Activated T-helper 1 cell treated with anti-CD3 and anti-CD28 coated beads, Interleukin-12 subunit alpha, Interleukin-12 subunit beta, Interleukin-2, Interleukin-4 antibody, amounts not matched to agents 30 ng/mL and 10 ng/mL and 1 ng/mL, durations not matched to agents 14 hours and 24 hours and 36 hours (primary cell): ENCODE measurements at regions of chr2 and their contacts with region 1.

Region 1: GRCh38 chr2:190534310-190535120 is at the start of gene NEMP2:
- DNase-seq: peak; percentile 82
- H3K4me3 Mint-ChIP-seq: peak within 1 kb of the TSS; percentile 95
- H3K27ac Mint-ChIP-seq: peak within 1 kb of the TSS; percentile 99
- H3K4me1 Mint-ChIP-seq: peaks cover 57% of the 10 kb centered on the region
- H3K27me3 Mint-ChIP-seq: no peaks in the 10 kb centered on the region
- total RNA-seq, gene NEMP2: 11.7 and 13.6 TPM in 2 replicates

Region 2: DNA sequence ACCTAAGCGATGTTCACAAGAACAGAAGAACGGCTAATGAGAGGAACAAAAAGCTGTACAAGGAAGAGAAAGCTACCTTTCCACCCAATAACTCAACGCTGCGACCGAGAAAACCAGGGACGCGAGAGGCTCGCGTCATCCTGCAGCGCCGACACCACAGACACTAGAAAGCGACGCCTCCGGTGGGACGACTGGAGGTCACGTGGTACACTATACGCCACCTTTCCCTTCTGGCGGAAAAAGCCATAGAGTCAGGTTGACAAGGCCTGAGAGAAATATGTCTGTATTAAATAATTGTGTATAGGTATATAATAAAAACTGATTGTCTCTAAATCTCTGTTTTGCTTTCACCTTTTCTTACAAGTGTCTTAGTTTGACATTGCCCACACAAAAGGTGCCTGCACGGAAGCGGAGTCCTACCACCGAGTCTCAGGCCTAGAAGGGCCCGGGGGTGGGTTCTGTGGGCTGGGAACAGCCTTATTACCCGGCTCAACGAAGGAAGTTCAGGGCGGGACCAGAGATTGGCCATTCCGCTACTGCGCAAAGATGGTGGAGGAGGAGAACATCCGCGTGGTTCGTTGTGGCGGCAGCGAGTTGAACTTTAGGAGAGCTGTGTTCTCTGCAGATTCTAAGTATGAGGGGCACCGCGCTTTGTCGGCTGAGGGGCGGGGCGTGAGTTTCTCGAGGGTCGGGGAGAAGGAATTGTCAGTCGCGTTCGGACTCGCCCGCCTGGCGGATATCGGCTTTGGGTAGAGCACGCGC is 1093.4 kb before region 1 on chr2 and contains the start of gene WDR75:
- intact Hi-C with region 1: loop called (anchors 10 kb)
- DNase-seq: peak; percentile 89
- H3K4me3 Mint-ChIP-seq: no peak within 1 kb of the TSS
- H3K27ac Mint-ChIP-seq: peak within 1 kb of the TSS; percentile 99
- H3K4me1 Mint-ChIP-seq: peaks cover 8% of the 10 kb centered on the region
- H3K27me3 Mint-ChIP-seq: peaks cover 3% of the 10 kb centered on the region
- total RNA-seq, gene WDR75: 108 and 112 TPM in 2 replicates

Region 3: DNA sequence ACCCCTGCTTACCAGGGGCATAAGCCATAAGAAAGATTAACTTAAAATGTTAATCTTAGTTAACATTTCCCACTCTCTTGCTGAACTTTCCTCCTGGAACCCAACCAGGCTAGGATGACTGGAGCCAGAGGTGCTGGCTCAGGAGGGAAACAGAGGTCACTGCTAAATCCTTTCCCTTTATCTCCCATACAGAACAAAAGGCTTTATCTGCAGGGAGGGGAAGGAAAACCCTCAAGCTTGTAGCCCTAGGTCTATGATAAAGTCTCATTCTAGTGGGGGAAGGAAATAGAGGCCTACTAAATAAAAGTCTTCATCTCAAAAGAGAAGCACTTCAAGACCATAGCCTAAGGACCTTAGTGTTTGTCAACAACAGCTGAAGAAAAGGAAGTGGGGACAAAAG is 233.5 kb before region 1 on chr2:
- intact Hi-C with region 1: no loop called
- DNase-seq: no peak
- H3K4me3 Mint-ChIP-seq: no peak overlapping the region
- H3K27ac Mint-ChIP-seq: no peak overlapping the region
- H3K4me1 Mint-ChIP-seq: peaks cover 8% of the 10 kb centered on the region
- H3K27me3 Mint-ChIP-seq: no peaks in the 10 kb centered on the region

Region 4: GRCh38 chr2:190511104-190511503 is 23.4 kb before region 1 on chr2:
- intact Hi-C with region 1: loop called (anchors 1 kb)
- DNase-seq: no peak
- H3K4me3 Mint-ChIP-seq: no peak overlapping the region
- H3K27ac Mint-ChIP-seq: no peak overlapping the region
- H3K4me1 Mint-ChIP-seq: peaks cover 29% of the 10 kb centered on the region
- H3K27me3 Mint-ChIP-seq: no peaks in the 10 kb centered on the region

Region 5: GRCh38 chr2:190648289-190649034 is 113.9 kb after region 1 on chr2:
- intact Hi-C with region 1: loop called (anchors 1 kb)
- DNase-seq: peak; percentile 84
- H3K4me3 Mint-ChIP-seq: peak overlapping the region; percentile 78
- H3K27ac Mint-ChIP-seq: peak overlapping the region; percentile 82
- H3K4me1 Mint-ChIP-seq: peaks cover 48% of the 10 kb centered on the region
- H3K27me3 Mint-ChIP-seq: no peaks in the 10 kb centered on the region

Region 6: DNA sequence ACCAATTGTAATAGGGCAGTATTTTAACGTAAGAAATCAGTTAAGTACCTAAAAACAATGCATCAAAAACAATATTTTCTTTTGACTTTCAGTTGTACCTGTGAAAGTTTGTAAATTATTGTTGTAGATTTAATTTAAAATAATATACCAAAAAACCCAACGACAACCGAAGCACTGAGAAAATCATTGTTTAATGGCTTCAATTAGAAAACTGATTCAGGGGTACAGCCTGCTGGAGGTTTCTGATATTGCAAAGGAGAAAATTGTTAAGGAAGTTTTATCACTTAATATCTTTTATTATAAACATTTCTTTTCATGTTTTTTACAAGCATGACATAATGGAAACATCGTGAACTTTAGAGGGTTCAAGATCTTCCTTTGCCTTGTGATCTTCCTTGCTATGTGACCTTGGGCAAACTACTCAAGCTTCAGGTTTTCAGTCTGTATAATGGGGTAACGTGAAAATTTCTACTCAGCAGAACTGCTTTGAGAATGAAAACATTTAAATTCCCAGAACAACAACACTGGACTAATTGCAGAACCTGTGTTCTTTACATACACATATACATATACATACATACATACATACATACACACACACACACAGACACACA is 269.8 kb after region 1 on chr2:
- intact Hi-C with region 1: loop called (anchors 5 kb)
- DNase-seq: no peak
- H3K4me3 Mint-ChIP-seq: no peak overlapping the region
- H3K27ac Mint-ChIP-seq: no peak overlapping the region
- H3K4me1 Mint-ChIP-seq: peaks cover 22% of the 10 kb centered on the region
- H3K27me3 Mint-ChIP-seq: no peaks in the 10 kb centered on the region